Heart right ventricle (tissue), 16 donors: ENCODE measurements at regions of chr12 and their contacts with region 1.

Region 1: GRCh38 chr12:1804545-1805332 is 15.6 kb upstream of the LRTM2 start:
- DNase-seq: peak; percentile 86 to 93
- ATAC-seq: peak; percentile 51 to 92 (median 86)
- H3K4me3 ChIP-seq: no peak overlapping the region
- H3K27ac ChIP-seq: peak overlapping the region in 6 of 10 donors; percentile 19 to 77 (median 42)
- H3K4me1 ChIP-seq: peaks cover 3 to 34% (median 14%) of the 10 kb centered on the region in 9 donors
- H3K27me3 ChIP-seq: no peaks in the 10 kb centered on the region
- CTCF ChIP-seq: no peak

Region 2: GRCh38 chr12:2023365-2023764 is 218.6 kb after region 1 on chr12:
- intact Hi-C with region 1: loop called in 1 of 10 experiments (anchors 10 kb)
- DNase-seq: no peak
- ATAC-seq: no peak
- H3K4me3 ChIP-seq: no peak overlapping the region
- H3K27ac ChIP-seq: no peak overlapping the region
- H3K4me1 ChIP-seq: peaks cover 0 to 63% (median 36%) of the 10 kb centered on the region in 9 donors
- H3K27me3 ChIP-seq: no peaks in the 10 kb centered on the region
- CTCF ChIP-seq: no peak